ENCODE measurements at regions of chr5 and their contacts with region 1.

Region 1: DNA sequence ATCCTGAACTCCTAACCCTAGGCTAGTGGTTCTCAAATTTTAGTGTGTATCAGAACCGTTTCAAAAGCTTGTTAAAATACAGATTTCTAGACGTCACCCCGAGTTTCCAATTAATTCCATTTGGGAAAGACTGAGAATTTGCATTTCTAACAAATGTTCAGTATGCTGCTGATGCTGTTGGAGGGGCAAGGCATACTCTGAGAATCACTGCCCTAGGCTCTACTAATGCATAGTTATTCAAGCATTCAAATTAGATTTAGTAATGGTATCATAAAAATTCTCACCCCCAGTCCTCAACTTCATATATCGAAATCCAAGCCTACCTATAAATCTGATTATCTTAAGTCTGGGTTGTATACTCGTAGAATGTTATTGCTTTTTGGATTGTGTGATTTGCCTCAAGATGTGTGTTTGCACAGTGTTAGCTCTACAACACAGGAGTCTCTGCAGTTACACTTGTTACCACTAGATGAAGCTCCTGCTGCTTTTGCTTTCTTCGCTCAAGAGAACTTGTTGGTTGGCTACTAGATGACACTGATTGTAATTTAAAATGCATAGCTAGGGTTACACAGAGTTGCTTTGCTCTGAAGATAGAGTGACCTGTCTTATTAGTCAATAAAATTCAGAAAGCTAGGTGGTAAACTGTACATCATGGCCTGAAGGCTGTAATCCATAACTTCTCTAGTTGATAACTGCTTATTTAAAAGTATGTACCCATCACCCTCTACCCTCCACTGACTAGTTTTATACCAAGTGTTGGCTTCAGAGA is 7.5 kb upstream of the ERAP2 start:
- DNase-seq: no peak
- ATAC-seq: peak; percentile 82
- H3K4me3 Mint-ChIP-seq: peak overlapping the region; percentile 54
- H3K27ac Mint-ChIP-seq: peak overlapping the region; percentile 78
- H3K4me1 Mint-ChIP-seq: peaks cover 47% of the 10 kb centered on the region
- H3K27me3 Mint-ChIP-seq: no peaks in the 10 kb centered on the region
- CTCF ChIP-seq: peak; percentile 43

Region 2: GRCh38 chr5:96885518-96886338 is 16.9 kb after region 1 on chr5:
- CTCF ChIA-PET with region 1: interaction called, 19 read pairs
- POLR2A ChIA-PET with region 1: interaction called, 22 read pairs
- intact Hi-C with region 1: loop called (anchors 1 kb)
- DNase-seq: no peak
- ATAC-seq: peak; percentile 85
- H3K4me3 Mint-ChIP-seq: peak overlapping the region; percentile 67
- H3K27ac Mint-ChIP-seq: peak overlapping the region; percentile 91
- H3K4me1 Mint-ChIP-seq: peaks cover 58% of the 10 kb centered on the region
- H3K27me3 Mint-ChIP-seq: no peaks in the 10 kb centered on the region
- CTCF ChIP-seq: no peak

Region 3: GRCh38 chr5:96957254-96958049 is 88.7 kb after region 1 on chr5:
- CTCF ChIA-PET with region 1: interaction called, 10 read pairs
- POLR2A ChIA-PET with region 1: interaction called, 4 read pairs
- intact Hi-C with region 1: loop called (anchors 1 kb)
- DNase-seq: no peak
- ATAC-seq: peak; percentile 40
- H3K4me3 Mint-ChIP-seq: peak overlapping the region; percentile 73
- H3K27ac Mint-ChIP-seq: peak overlapping the region; percentile 86
- H3K4me1 Mint-ChIP-seq: peaks cover 84% of the 10 kb centered on the region
- H3K27me3 Mint-ChIP-seq: no peaks in the 10 kb centered on the region
- CTCF ChIP-seq: no peak

Region 4: GRCh38 chr5:96997265-96997859 is 128.6 kb after region 1 on chr5:
- CTCF ChIA-PET with region 1: interaction called, 82 read pairs
- POLR2A ChIA-PET with region 1: interaction called, 9 read pairs
- intact Hi-C with region 1: loop called (anchors 1 kb)
- DNase-seq: no peak
- ATAC-seq: peak; percentile 68
- H3K4me3 Mint-ChIP-seq: no peak overlapping the region
- H3K27ac Mint-ChIP-seq: no peak overlapping the region
- H3K4me1 Mint-ChIP-seq: peaks cover 6% of the 10 kb centered on the region
- H3K27me3 Mint-ChIP-seq: no peaks in the 10 kb centered on the region
- CTCF ChIP-seq: no peak

Region 5: DNA sequence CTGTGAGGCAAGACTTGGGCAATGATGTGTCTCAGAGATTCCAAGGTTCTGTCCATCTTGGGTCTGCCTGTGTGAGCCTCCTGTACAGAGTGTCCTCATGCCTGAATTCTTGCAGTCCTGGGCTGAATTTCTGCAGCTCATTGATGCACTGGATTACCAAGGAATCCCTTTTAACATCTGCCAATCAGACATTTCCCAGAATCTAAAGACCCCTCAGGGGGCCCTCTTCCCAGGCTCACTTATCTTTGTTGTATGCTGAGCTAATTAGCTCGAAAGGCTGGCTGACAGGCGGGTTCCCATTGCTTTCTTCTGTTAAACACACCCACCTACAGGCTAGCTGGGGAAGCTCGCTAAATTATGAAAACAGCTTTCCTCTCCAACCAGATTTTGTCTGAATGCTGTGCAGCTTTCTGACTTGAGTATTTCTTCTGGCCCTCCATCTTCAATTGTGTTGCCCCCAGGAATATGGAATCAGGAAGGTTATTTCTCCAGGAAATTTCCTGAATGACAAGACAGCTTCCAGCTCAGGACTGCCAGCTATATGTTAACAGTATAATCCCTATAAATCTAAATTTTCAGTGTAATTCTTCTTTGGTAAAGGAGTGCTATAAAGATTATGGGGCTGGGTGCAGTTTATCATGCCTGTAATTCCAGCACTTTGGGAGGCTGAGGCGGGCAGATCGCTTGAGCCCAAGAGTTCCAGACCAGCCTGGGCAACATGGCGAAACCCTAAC is 273.9 kb after region 1 on chr5 and contains the start of gene LIX1:
- CTCF ChIA-PET with region 1: interaction called, 58 read pairs
- POLR2A ChIA-PET with region 1: no interaction called
- intact Hi-C with region 1: loop called (anchors 1 kb)
- DNase-seq: no peak
- ATAC-seq: peak; percentile 60
- H3K4me3 Mint-ChIP-seq: no peak within 1 kb of the TSS
- H3K27ac Mint-ChIP-seq: no peak within 1 kb of the TSS
- H3K4me1 Mint-ChIP-seq: no peaks in the 10 kb centered on the region
- H3K27me3 Mint-ChIP-seq: peaks cover 3% of the 10 kb centered on the region
- CTCF ChIP-seq: no peak
- total RNA-seq, gene LIX1: not detected in 2 replicates

Measured in activated B cell treated with CpG ODN at 0.5 μM for 24 hours (primary cell).